ENCODE measurements at regions of chr4 and their contacts with region 1.

Region 1: GRCh38 chr4:15655229-15656037 is at the start of gene FBXL5:
- DNase-seq: peak; percentile 77 to 88 (median 86)
- H3K4me3 ChIP-seq: peak within 1 kb of the TSS; percentile 77
- H3K4me3 Mint-ChIP-seq: peak within 1 kb of the TSS; percentile 96 to 100 (median 98)
- H3K27ac ChIP-seq: peak within 1 kb of the TSS; percentile 87
- H3K27ac Mint-ChIP-seq: peak within 1 kb of the TSS; percentile 96 to 99 (median 98)
- H3K4me1 ChIP-seq: peaks cover 44% of the 10 kb centered on the region
- H3K4me1 Mint-ChIP-seq: peaks cover 42 to 46% (median 44%) of the 10 kb centered on the region in 3 donors
- H3K27me3 ChIP-seq: no peaks in the 10 kb centered on the region
- H3K27me3 Mint-ChIP-seq: no peaks in the 10 kb centered on the region
- total RNA-seq, gene FBXL5: 25.1 to 27.6 TPM

Region 2: GRCh38 chr4:15005474-15006115 is 649.8 kb before region 1 on chr4:
- CTCF ChIA-PET with region 1: interaction called, 4 read pairs
- POLR2A ChIA-PET with region 1: interaction called, 10 read pairs
- DNase-seq: no peak
- H3K4me3 ChIP-seq: peak overlapping the region; percentile 52
- H3K4me3 Mint-ChIP-seq: peak overlapping the region; percentile 85 to 100 (median 94)
- H3K27ac ChIP-seq: peak overlapping the region; percentile 29
- H3K27ac Mint-ChIP-seq: peak overlapping the region; percentile 84 to 100 (median 90)
- H3K4me1 ChIP-seq: peaks cover 11% of the 10 kb centered on the region
- H3K4me1 Mint-ChIP-seq: peaks cover 37 to 59% (median 57%) of the 10 kb centered on the region in 3 donors
- H3K27me3 ChIP-seq: no peaks in the 10 kb centered on the region
- H3K27me3 Mint-ChIP-seq: peaks cover 0 to 1% of the 10 kb centered on the region in 2 donors

Region 3: GRCh38 chr4:15681207-15682015 is 26.0 kb after region 1 on chr4 and contains the start of gene FAM200B:
- CTCF ChIA-PET with region 1: interaction called, 7 read pairs
- POLR2A ChIA-PET with region 1: interaction called, 14 read pairs
- DNase-seq: peak; percentile 91 to 98 (median 95)
- H3K4me3 ChIP-seq: peak within 1 kb of the TSS; percentile 97
- H3K4me3 Mint-ChIP-seq: peak within 1 kb of the TSS; percentile 92 to 98 (median 96)
- H3K27ac ChIP-seq: peak within 1 kb of the TSS; percentile 88
- H3K27ac Mint-ChIP-seq: peak within 1 kb of the TSS; percentile 89 to 98 (median 98)
- H3K4me1 ChIP-seq: peaks cover 20% of the 10 kb centered on the region
- H3K4me1 Mint-ChIP-seq: peaks cover 30 to 47% (median 45%) of the 10 kb centered on the region in 3 donors
- H3K27me3 ChIP-seq: no peaks in the 10 kb centered on the region
- H3K27me3 Mint-ChIP-seq: no peaks in the 10 kb centered on the region
- total RNA-seq, gene FAM200B: 10.0 to 12.7 TPM